ENCODE measurements at regions of chr9 and their contacts with region 1.

Region 1: DNA sequence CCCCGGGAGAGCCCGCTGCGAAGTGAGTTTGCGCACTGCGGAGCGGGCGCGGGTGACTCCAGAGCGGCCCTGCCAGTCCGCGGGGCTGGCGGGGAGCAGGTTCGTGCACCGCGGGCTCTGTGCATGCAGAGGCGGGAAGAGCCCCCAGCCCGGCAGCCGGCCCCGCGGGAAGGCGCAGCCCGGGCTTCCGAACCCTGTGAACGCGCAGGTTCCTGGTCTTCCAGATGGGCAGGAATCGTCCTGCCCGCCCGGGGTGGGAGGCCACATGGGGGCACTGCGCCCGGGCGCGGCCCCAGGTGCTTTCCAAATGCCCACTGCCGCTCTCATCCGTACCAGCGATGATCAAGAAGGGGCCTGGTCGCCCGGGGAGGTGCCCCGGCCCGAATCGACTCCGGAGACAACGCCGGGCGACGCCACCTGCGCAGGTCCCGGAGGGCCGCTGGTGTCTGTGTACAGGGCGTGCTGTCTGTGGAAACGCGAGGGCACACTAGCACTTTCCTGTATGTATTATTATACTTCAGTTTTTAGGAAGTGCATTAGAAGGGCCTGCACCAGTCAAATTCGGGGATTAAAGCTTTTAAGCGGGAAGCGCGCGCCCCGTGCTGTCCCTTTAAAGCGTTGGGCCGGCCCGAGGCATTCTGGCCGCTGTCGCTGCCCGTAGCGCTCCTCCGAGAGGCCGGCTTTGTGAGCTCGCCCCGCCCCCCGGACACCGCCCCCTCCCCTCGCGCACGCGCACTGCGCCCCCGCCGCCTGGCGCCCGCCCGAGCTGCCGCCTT is at the start of gene WDR5:
- DNase-seq: peak; percentile 95
- H3K4me3 ChIP-seq: peak within 1 kb of the TSS; percentile 74 to 95 (median 84)
- H3K27ac ChIP-seq: peak within 1 kb of the TSS; percentile 85 to 96 (median 91)
- H3K4me1 ChIP-seq: peaks cover 37 to 68% (median 63%) of the 10 kb centered on the region in 4 donors
- H3K27me3 ChIP-seq: no peaks in the 10 kb centered on the region
- CTCF ChIP-seq: peak in 1 of 3 experiments; percentile 3
- EP300 ChIP-seq: no peak
- POLR2A ChIP-seq: no peak
- total RNA-seq, gene WDR5: 20.7 to 34.2 (median 24.6) TPM

Region 2: GRCh38 chr9:133876144-133876543 is 259.4 kb before region 1 on chr9:
- intact Hi-C with region 1: no loop called
- DNase-seq: no peak
- H3K4me3 ChIP-seq: no peak overlapping the region
- H3K27ac ChIP-seq: no peak overlapping the region
- H3K4me1 ChIP-seq: peaks cover 0 to 9% (median 0%) of the 10 kb centered on the region in 4 donors
- H3K27me3 ChIP-seq: no peaks in the 10 kb centered on the region
- CTCF ChIP-seq: peak in 1 of 3 experiments; percentile 5
- EP300 ChIP-seq: no peak
- POLR2A ChIP-seq: no peak

Region 3: GRCh38 chr9:134024828-134025605 is 110.5 kb before region 1 on chr9 and contains the start of gene BRD3OS:
- intact Hi-C with region 1: loop called (anchors 10 kb)
- DNase-seq: peak; percentile 100
- H3K4me3 ChIP-seq: peak within 1 kb of the TSS; percentile 79 to 98 (median 95)
- H3K27ac ChIP-seq: peak within 1 kb of the TSS; percentile 75 to 86 (median 82)
- H3K4me1 ChIP-seq: peaks cover 8 to 19% (median 18%) of the 10 kb centered on the region in 4 donors
- H3K27me3 ChIP-seq: no peaks in the 10 kb centered on the region
- CTCF ChIP-seq: peak in 1 of 3 experiments; percentile 31
- EP300 ChIP-seq: no peak
- POLR2A ChIP-seq: no peak
- total RNA-seq, gene BRD3OS: 13.4 to 33.4 (median 21.7) TPM

Region 4: GRCh38 chr9:134316449-134317160 is 181.1 kb after region 1 on chr9:
- intact Hi-C with region 1: no loop called
- DNase-seq: no peak
- H3K4me3 ChIP-seq: no peak overlapping the region
- H3K27ac ChIP-seq: no peak overlapping the region
- H3K4me1 ChIP-seq: peaks cover 10 to 33% (median 29%) of the 10 kb centered on the region in 4 donors
- H3K27me3 ChIP-seq: no peaks in the 10 kb centered on the region
- CTCF ChIP-seq: no peak
- EP300 ChIP-seq: no peak
- POLR2A ChIP-seq: no peak

Measured in esophagus muscularis mucosa (tissue), 4 donors.